ENCODE measurements at regions of chr5 and their contacts with region 1.

Region 1: GRCh38 chr5:55146543-55147151 is 13.3 kb upstream of the GPX8 start:
- DNase-seq: peak; percentile 64 to 74
- ATAC-seq: peak; percentile 78 to 95 (median 84)
- H3K4me3 ChIP-seq: no peak overlapping the region
- H3K27ac ChIP-seq: no peak overlapping the region
- H3K4me1 ChIP-seq: no peaks in the 10 kb centered on the region
- H3K27me3 ChIP-seq: peaks cover 0 to 5% (median 4%) of the 10 kb centered on the region in 3 donors
- CTCF ChIP-seq: peak; percentile 89

Region 2: GRCh38 chr5:54905943-54906537 is 240.6 kb before region 1 on chr5:
- intact Hi-C with region 1: loop called (anchors 2 to 5 kb)
- DNase-seq: peak; percentile 59 to 60
- ATAC-seq: no peak
- H3K4me3 ChIP-seq: no peak overlapping the region
- H3K27ac ChIP-seq: no peak overlapping the region
- H3K4me1 ChIP-seq: no peaks in the 10 kb centered on the region
- H3K27me3 ChIP-seq: no peaks in the 10 kb centered on the region
- CTCF ChIP-seq: peak; percentile 55

Region 3: DNA sequence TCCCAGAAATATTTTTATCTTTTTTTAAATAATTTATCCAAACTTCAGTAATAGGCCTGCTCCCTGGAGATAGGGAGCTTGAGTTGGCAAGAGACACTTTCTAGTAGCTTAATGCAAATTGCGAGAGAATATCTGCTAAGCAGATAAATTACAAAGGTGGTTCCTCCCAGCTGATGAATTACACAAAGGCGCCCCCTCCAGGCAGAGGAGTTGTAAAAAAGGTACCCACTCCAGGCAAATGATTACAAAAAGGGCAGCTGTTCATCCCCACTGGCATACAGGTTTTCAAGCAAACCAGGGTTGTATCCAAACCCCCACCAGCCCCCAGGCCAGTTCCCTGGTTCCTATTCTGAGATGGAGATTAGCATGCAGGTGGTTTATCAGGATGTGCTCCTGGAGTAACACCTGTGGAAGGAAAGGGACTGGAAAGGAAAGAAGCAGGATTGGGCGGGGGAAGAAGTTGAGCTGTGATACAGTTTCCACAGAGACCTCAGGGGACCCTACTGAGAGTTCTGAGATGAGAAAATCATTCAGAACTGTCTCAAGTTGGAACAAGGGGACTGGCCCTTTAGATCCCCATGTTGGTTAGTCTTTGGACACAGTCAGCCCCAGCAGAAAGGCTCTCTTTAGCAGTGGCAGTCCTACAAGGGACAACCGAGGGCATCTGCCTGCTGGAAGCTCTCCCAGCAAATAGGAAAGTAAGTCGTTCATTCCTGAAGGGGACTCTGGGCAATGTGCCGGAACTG is 186.8 kb before region 1 on chr5:
- intact Hi-C with region 1: loop called in 1 of 2 experiments (anchors 10 kb)
- DNase-seq: no peak
- ATAC-seq: no peak
- H3K4me3 ChIP-seq: no peak overlapping the region
- H3K27ac ChIP-seq: no peak overlapping the region
- H3K4me1 ChIP-seq: no peaks in the 10 kb centered on the region
- H3K27me3 ChIP-seq: peaks cover 0 to 2% (median 2%) of the 10 kb centered on the region in 3 donors
- CTCF ChIP-seq: no peak

Region 4: DNA sequence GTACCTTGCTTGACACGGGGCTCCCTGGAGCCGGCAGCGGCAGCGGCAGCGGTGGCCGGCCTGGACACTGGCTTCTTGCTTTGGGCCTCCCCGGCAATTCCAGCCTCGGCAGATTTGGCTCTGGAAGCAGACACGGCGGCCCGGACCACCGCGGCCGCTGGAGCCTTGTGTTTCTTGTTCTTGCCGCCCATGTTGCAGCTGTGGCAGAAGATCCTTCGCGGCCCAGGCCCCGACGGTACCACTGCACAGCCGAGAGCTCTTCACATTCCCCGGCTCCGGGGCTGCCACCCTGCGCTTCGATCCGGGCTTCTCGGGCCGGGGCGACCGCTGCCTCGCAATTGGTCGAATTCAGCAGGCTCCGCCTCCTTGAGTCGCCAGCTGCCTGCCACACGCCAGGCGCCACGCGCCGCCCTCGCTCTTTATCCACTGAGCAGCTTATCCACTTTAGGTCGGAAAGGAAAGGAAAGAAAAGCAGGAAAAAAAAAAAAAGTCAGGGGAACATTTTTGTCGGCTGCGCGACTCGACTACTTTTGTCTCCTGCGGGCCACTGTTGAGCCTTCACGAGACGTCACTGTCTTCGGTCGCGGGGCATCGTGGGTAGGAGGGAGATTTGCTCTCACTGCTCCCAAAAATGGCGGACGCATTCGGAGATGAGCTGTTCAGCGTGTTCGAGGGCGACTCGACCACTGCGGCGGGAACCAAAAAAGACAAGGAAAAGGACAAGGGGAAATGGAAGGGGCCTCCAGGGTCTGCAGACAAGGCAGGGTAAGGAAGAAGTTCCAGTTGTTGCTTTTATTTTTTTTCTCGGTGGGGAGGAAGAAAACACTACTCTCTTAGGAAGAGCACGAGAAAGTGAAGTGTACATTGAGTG is 161.0 kb after region 1 on chr5 and contains the starts of genes DHX29 and MTREX:
- intact Hi-C with region 1: no loop called
- DNase-seq: peak; percentile 91 to 94
- ATAC-seq: peak; percentile 92 to 95 (median 95)
- H3K4me3 ChIP-seq: peak within 1 kb of the TSS; percentile 95
- H3K27ac ChIP-seq: peak within 1 kb of the TSS; percentile 96
- H3K4me1 ChIP-seq: peaks cover 58% of the 10 kb centered on the region
- H3K27me3 ChIP-seq: no peaks in the 10 kb centered on the region
- CTCF ChIP-seq: no peak
- total RNA-seq, gene DHX29: 25.6 to 38.5 (median 33.3) TPM
- total RNA-seq, gene MTREX: 59.5 to 79.4 (median 75.4) TPM